Activated CD4-positive, alpha-beta memory T cell treated with anti-CD3 and anti-CD28 coated beads, Interleukin-2, amount 10 ng/mL, durations not matched to agents 7 days and 5 days (primary cell): ENCODE measurements at regions of chr5 and their contacts with region 1.

Region 1: DNA sequence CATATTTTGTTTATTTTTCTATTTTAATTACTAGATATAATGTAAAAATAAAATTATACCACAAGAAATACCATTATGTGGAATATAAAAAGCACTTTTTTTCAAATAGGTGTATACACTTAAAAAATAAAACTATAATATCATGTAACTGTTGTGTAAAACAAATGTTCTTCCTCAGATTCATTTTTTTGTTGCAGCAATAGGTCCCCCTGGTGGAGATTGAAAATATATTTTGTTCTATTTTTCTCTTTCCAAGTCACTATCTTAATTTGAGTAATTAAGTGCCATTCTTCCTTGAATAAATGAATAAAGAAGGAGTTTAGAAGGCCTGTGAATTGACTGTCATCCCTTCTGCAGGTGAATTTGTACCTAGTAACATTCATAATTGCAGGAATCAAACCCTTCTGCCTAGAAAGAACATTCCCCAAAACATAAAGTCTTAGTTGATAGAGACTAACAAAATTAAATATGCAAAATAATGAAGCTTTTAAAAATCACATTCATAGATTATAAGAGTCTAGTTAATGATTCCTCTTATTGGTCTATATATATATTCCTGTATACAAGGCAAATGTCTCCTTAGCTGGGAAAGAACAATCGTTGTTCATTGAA is 23.4 kb downstream of the CETN3 start:
- DNase-seq: no peak
- H3K4me3 Mint-ChIP-seq: no peak overlapping the region
- H3K27ac Mint-ChIP-seq: no peak overlapping the region
- H3K4me1 Mint-ChIP-seq: no peaks in the 10 kb centered on the region
- H3K27me3 Mint-ChIP-seq: peaks cover 4% of the 10 kb centered on the region

Region 2: GRCh38 chr5:90293931-90294330 is 92.3 kb before region 1 on chr5:
- CTCF ChIA-PET with region 1: no interaction called
- POLR2A ChIA-PET with region 1: no interaction called
- DNase-seq: no peak
- H3K4me3 Mint-ChIP-seq: no peak overlapping the region
- H3K27ac Mint-ChIP-seq: no peak overlapping the region
- H3K4me1 Mint-ChIP-seq: no peaks in the 10 kb centered on the region
- H3K27me3 Mint-ChIP-seq: no peaks in the 10 kb centered on the region

Region 3: GRCh38 chr5:90326995-90327394 is 59.2 kb before region 1 on chr5:
- CTCF ChIA-PET with region 1: no interaction called
- POLR2A ChIA-PET with region 1: no interaction called
- DNase-seq: no peak
- H3K4me3 Mint-ChIP-seq: no peak overlapping the region
- H3K27ac Mint-ChIP-seq: no peak overlapping the region
- H3K4me1 Mint-ChIP-seq: no peaks in the 10 kb centered on the region
- H3K27me3 Mint-ChIP-seq: peaks cover 1% of the 10 kb centered on the region

Region 4: GRCh38 chr5:90398726-90399125 is 12.5 kb after region 1 on chr5:
- CTCF ChIA-PET with region 1: interaction called, 12 read pairs
- POLR2A ChIA-PET with region 1: no interaction called
- DNase-seq: no peak
- H3K4me3 Mint-ChIP-seq: no peak overlapping the region
- H3K27ac Mint-ChIP-seq: no peak overlapping the region
- H3K4me1 Mint-ChIP-seq: peaks cover 3% of the 10 kb centered on the region
- H3K27me3 Mint-ChIP-seq: no peaks in the 10 kb centered on the region

Region 5: DNA sequence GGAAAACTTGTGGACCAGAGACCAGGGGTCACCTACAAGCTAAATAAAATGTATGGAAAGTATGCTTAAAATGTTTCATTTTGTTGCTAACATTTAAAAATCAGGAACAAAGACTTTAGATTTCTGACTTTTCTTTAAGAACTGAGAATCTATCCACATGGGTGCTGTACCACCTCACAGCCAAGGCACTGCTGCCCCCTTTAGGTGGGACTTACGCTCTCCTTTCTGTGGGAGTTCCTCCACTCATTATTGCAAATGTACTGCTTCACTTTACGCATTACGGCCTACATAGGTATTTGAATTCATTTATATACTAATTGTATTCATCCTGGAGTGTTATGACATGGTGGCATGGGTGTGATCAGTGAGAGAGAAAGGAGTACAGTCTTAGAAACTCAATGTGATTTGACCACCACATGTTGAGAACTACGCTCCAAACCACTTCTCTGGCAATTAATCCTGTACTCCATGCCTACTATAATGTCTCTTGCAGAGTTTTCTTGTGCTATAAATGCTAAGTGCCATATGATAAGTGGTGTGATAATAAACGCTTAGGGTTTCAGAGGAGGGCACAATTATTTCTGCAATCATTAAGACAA is 48.0 kb after region 1 on chr5:
- CTCF ChIA-PET with region 1: no interaction called
- POLR2A ChIA-PET with region 1: no interaction called
- DNase-seq: peak; percentile 37
- H3K4me3 Mint-ChIP-seq: no peak overlapping the region
- H3K27ac Mint-ChIP-seq: no peak overlapping the region
- H3K4me1 Mint-ChIP-seq: no peaks in the 10 kb centered on the region
- H3K27me3 Mint-ChIP-seq: peaks cover 12% of the 10 kb centered on the region